Heart left ventricle (tissue), 16 donors: ENCODE measurements at regions of chr2 and their contacts with region 1.

Region 1: GRCh38 chr2:39379643-39380524 is 57.2 kb downstream of the MAP4K3 start:
- DNase-seq: peak in 1 of 5 donors; percentile 22
- ATAC-seq: peak; percentile 62 to 81 (median 75)
- H3K4me3 ChIP-seq: peak overlapping the region in 2 of 12 donors; percentile 1 to 10
- H3K27ac ChIP-seq: peak overlapping the region; percentile 27 to 83 (median 55)
- H3K4me1 ChIP-seq: peaks cover 4 to 61% (median 46%) of the 10 kb centered on the region in 12 donors
- H3K27me3 ChIP-seq: no peaks in the 10 kb centered on the region
- CTCF ChIP-seq: peak; percentile 47 to 82 (median 63)
- POLR2A ChIP-seq: no peak

Region 2: GRCh38 chr2:39275016-39275415 is 104.9 kb before region 1 on chr2:
- intact Hi-C with region 1: no loop called
- DNase-seq: no peak
- ATAC-seq: no peak
- H3K4me3 ChIP-seq: no peak overlapping the region
- H3K27ac ChIP-seq: no peak overlapping the region
- H3K4me1 ChIP-seq: no peaks in the 10 kb centered on the region
- H3K27me3 ChIP-seq: no peaks in the 10 kb centered on the region
- CTCF ChIP-seq: no peak
- POLR2A ChIP-seq: no peak

Region 3: DNA sequence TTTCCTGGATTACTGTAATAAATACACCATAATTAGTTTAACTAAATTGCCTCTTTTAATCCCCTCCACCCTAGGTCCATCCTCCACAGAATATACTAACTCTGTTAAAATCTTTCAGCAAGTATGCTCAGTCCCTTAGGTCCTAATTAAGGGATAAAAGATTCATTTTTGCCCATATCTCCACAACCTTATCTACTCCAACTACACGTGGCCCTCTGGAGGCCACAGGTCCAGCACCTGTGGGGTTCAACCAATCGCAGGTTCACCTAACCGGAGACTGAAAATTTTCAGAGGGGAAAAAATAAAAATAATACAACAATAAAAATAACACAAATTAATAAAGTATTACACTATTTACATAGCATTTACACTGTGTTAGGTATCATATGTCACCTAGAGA is 29.2 kb before region 1 on chr2:
- intact Hi-C with region 1: no loop called
- DNase-seq: no peak
- ATAC-seq: no peak
- H3K4me3 ChIP-seq: no peak overlapping the region
- H3K27ac ChIP-seq: no peak overlapping the region
- H3K4me1 ChIP-seq: peaks cover 0 to 34% (median 10%) of the 10 kb centered on the region in 12 donors
- H3K27me3 ChIP-seq: no peaks in the 10 kb centered on the region
- CTCF ChIP-seq: no peak
- POLR2A ChIP-seq: no peak

Region 4: DNA sequence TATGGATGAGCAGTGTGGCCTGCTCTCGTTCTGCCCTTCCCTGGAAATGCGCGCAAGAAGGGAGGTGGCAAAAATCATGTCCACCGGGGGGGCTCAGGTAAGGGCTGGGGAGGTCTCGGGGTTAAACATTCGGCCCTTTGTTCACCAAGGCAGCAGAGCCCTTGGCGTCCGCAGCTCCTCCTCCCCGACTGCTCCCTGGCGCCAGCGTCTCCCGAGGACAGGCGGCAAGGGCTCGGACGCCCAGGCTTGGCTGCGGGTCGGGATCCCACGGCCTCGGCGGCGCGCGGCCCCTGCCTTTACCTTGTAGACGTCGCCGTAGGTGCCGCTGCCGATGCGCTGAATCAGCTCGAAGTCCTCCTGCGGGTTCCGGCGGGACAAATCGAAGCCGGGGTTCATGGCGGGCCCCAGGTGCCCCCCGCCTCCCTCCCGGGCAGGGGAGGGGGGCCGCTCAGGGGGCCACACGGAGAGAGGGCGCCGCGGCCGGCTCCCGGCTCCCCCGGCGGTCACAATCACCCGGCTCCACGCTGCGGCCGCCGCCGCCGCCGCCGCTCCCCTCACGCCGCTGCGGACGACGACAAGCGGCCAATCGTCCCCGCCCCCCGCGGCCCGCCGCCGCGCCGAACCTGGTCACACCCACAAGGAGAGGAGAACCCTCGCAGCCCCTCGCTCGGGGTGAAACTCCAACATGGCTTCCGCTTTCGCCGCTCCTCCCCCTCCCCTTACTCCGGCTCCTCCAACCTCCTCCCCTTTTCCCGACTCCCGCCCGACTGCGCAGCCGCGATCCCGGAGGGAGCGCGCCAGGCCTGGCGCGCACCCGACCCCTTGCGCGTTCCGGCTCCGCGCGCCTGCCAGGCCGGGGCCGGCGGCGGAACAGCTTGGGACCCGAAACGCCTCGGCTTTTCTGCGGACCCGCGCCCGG is 57.0 kb after region 1 on chr2 and contains the start of gene MAP4K3:
- intact Hi-C with region 1: loop called in 8 of 10 experiments (anchors 2 to 10 kb)
- DNase-seq: peak; percentile 95 to 96 (median 95)
- ATAC-seq: peak; percentile 79 to 94 (median 92)
- H3K4me3 ChIP-seq: peak within 1 kb of the TSS; percentile 71 to 96 (median 88)
- H3K27ac ChIP-seq: peak within 1 kb of the TSS; percentile 90 to 99 (median 97)
- H3K4me1 ChIP-seq: peaks cover 3 to 66% (median 47%) of the 10 kb centered on the region in 12 donors
- H3K27me3 ChIP-seq: no peaks in the 10 kb centered on the region
- CTCF ChIP-seq: peak in 1 of 12 donors; percentile 2
- POLR2A ChIP-seq: peak; percentile 26 to 92
- total RNA-seq, gene MAP4K3: 26.2 to 45.4 (median 33.7) TPM

Region 5: GRCh38 chr2:39504790-39505335 is 125.0 kb after region 1 on chr2:
- intact Hi-C with region 1: loop called in 9 of 10 experiments (anchors 5 to 10 kb)
- DNase-seq: no peak
- ATAC-seq: peak; percentile 31 to 58 (median 54)
- H3K4me3 ChIP-seq: peak overlapping the region in 3 of 12 donors; percentile 1 to 13 (median 1)
- H3K27ac ChIP-seq: peak overlapping the region; percentile 31 to 84 (median 72)
- H3K4me1 ChIP-seq: peaks cover 2 to 73% (median 41%) of the 10 kb centered on the region in 12 donors
- H3K27me3 ChIP-seq: no peaks in the 10 kb centered on the region
- CTCF ChIP-seq: no peak
- POLR2A ChIP-seq: no peak

Region 6: GRCh38 chr2:39593439-39594393 is 213.8 kb after region 1 on chr2:
- intact Hi-C with region 1: loop called in 1 of 10 experiments (anchors 5 kb)
- DNase-seq: peak in 4 of 5 donors; percentile 42 to 63 (median 56)
- ATAC-seq: peak; percentile 30 to 93 (median 87)
- H3K4me3 ChIP-seq: no peak overlapping the region
- H3K27ac ChIP-seq: no peak overlapping the region
- H3K4me1 ChIP-seq: peaks cover 0 to 5% (median 2%) of the 10 kb centered on the region in 12 donors
- H3K27me3 ChIP-seq: no peaks in the 10 kb centered on the region
- CTCF ChIP-seq: peak; percentile 34 to 75 (median 66)
- POLR2A ChIP-seq: no peak

Region 7: GRCh38 chr2:39728941-39729351 is 349.1 kb after region 1 on chr2:
- intact Hi-C with region 1: loop called in 4 of 10 experiments (anchors 5 to 10 kb)
- DNase-seq: peak in 2 of 5 donors; percentile 28 to 39
- ATAC-seq: peak in 1 of 4 donors; percentile 40
- H3K4me3 ChIP-seq: no peak overlapping the region
- H3K27ac ChIP-seq: no peak overlapping the region
- H3K4me1 ChIP-seq: peaks cover 0 to 19% (median 2%) of the 10 kb centered on the region in 12 donors
- H3K27me3 ChIP-seq: no peaks in the 10 kb centered on the region
- CTCF ChIP-seq: peak; percentile 34 to 72 (median 60)
- POLR2A ChIP-seq: no peak